PC-9 (cell line): ENCODE measurements at regions of chr6 and their contacts with region 1.

Region 1: DNA sequence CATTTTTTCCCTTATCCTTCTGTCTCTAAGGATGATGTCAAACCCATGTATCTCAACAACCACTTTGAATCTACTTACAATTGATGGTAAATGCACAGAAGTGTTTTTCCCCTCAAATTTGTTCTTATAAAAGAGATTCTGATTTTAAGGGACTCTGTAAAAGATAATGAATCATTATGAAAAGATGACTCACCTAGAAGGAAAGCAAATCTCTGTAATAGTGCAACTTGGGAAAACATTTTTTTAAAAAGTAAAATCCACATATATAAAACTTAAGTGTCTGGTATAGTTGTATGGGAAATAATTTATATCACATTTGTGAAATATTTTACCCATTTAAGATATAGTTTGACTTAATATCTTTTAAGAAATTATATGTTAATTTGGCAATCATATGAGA is 137.0 kb downstream of the TINAG start:
- DNase-seq: no peak
- H3K4me3 ChIP-seq: no peak overlapping the region
- H3K27ac ChIP-seq: no peak overlapping the region
- H3K4me1 ChIP-seq: 0 out of 2 replicates have a peak, but pooled peaks cover 6% of the 10 kb centered on the region
- H3K27me3 ChIP-seq: no peaks in the 10 kb centered on the region
- CTCF ChIP-seq: no peak

Region 2: DNA sequence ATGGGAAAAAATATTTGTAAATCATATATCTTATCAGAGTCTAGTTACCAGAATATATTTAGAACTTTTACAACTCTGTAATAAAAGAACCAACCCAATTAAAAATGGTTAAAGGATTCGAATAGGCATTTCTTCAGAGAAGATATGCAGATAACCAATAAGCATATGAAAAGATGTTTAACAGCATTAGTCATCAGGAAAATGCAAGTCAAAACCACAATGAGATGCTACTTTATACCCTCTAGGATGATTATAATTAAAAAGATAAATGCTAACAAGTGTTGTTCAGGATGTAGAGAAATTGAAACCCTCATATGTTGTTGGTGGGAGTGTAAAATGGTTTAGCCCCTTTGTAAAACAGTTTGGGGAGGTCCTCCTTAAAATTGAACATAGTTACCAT is 556.3 kb before region 1 on chr6:
- CTCF ChIA-PET with region 1: no interaction called
- POLR2A ChIA-PET with region 1: interaction called, 12 read pairs
- intact Hi-C with region 1: no loop called
- DNase-seq: no peak
- H3K4me3 ChIP-seq: no peak overlapping the region
- H3K27ac ChIP-seq: no peak overlapping the region
- H3K4me1 ChIP-seq: no peaks in the 10 kb centered on the region
- H3K27me3 ChIP-seq: no peaks in the 10 kb centered on the region
- CTCF ChIP-seq: no peak